Endothelial cell of umbilical vein (primary cell): ENCODE measurements at regions of chr2 and their contacts with region 1.

Region 1: DNA sequence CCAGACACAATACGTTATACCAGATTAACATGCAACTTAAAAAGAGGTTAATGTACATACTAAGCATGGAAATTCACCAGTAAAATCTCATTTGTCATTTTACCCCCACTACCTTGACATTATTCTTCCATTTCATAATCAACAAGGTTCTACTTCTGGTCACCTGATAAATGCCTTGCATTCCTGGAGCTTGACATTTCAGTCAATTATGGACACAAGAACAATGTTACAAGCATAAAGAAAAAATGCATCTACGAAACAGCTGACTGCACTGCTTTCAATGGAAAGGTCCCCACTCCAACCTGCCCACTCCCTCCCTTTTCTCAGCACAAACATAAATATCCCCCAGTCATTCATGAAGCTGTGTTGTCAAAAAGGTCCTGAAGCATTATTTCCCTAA is 31.4 kb downstream of the ARL5A start:
- DNase-seq: no peak
- H3K4me3 ChIP-seq: no peak overlapping the region
- H3K27ac ChIP-seq: no peak overlapping the region
- H3K4me1 ChIP-seq: no peaks in the 10 kb centered on the region
- H3K27me3 ChIP-seq: no peaks in the 10 kb centered on the region
- CTCF ChIP-seq: no peak
- POLR2A ChIP-seq: no peak

Region 2: DNA sequence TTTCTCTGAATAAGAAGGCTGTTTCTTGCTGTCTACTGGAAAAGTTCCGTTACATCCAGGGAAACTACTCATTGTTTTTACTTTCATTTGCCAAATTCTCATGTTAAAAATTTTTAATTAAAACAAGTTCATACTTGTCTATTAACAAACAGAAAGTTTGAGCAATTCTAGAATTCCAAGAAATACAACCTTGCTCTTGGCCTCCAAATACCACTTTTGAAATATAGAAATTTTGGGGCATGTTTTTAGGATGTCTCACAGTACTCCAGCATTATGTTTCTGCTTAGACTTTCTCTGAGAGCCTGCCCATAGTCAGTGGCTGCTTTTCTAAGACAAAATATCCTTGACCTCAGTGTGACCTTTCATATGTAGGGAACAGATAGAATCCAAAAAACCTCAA is 1080.6 kb before region 1 on chr2:
- CTCF ChIA-PET with region 1: no interaction called
- POLR2A ChIA-PET with region 1: no interaction called
- dilution Hi-C with region 1: no loop called
- intact Hi-C with region 1: no loop called
- DNase-seq: no peak
- H3K4me3 ChIP-seq: no peak overlapping the region
- H3K27ac ChIP-seq: no peak overlapping the region
- H3K4me1 ChIP-seq: no peaks in the 10 kb centered on the region
- H3K27me3 ChIP-seq: no peaks in the 10 kb centered on the region
- CTCF ChIP-seq: no peak
- POLR2A ChIP-seq: no peak

Region 3: GRCh38 chr2:151808258-151809072 is 11.7 kb after region 1 on chr2:
- CTCF ChIA-PET with region 1: interaction called, 10 read pairs
- POLR2A ChIA-PET with region 1: no interaction called
- dilution Hi-C with region 1: no loop called
- intact Hi-C with region 1: no loop called
- DNase-seq: peak; percentile 26
- H3K4me3 ChIP-seq: no peak overlapping the region
- H3K27ac ChIP-seq: no peak overlapping the region
- H3K4me1 ChIP-seq: peaks cover 5% of the 10 kb centered on the region
- H3K27me3 ChIP-seq: no peaks in the 10 kb centered on the region
- CTCF ChIP-seq: peak in 1 of 2 donors; percentile 28
- POLR2A ChIP-seq: no peak